Calu3 (cell line): ENCODE measurements at regions of chr10 and their contacts with region 1.

Region 1: GRCh38 chr10:11602919-11603523 is 8.4 kb downstream of the USP6NL start:
- DNase-seq: no peak
- H3K4me3 Mint-ChIP-seq: no peak overlapping the region
- H3K27ac Mint-ChIP-seq: peak overlapping the region; percentile 43
- H3K4me1 Mint-ChIP-seq: peaks cover 35% of the 10 kb centered on the region
- H3K27me3 Mint-ChIP-seq: no peaks in the 10 kb centered on the region
- CTCF ChIP-seq: no peak

Region 2: DNA sequence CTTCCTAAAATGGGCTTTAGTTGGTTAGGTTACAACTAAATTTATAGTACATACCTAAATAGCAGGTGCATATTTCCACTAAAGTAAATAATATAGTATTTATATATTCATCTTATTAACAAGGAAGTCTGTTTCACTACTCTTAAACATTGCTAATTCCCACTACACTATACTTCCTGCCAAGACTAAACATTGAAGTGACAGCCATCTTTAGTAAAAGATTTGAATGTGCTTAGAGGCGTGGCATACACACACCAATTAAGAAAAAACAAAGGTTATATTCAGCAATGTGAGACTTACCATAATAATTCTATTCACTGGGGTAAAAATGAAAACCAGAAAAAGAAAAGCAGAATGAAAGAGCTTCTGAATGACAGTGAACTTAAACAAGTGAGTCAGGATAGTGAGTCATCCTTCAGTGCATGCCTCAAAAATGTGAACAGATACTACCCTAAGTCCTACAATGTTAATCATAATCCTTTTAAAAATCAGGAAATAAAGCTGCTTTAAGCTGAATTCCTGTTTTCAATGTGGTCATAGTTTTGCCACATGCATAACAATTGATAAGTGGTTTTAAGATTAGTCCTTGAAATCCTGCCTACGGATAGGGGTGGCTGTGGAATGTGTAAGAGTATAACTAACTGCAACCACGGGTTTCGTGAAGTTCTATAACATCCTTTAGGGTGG is 51.0 kb before region 1 on chr10:
- CTCF ChIA-PET with region 1: interaction called, 4 read pairs
- intact Hi-C with region 1: loop called (anchors 5 kb)
- DNase-seq: peak; percentile 24
- H3K4me3 Mint-ChIP-seq: peak overlapping the region; percentile 20
- H3K27ac Mint-ChIP-seq: peak overlapping the region; percentile 82
- H3K4me1 Mint-ChIP-seq: peaks cover 76% of the 10 kb centered on the region
- H3K27me3 Mint-ChIP-seq: no peaks in the 10 kb centered on the region
- CTCF ChIP-seq: no peak

Region 3: GRCh38 chr10:11715815-11716494 is 112.9 kb after region 1 on chr10:
- CTCF ChIA-PET with region 1: no interaction called
- intact Hi-C with region 1: loop called (anchors 5 kb)
- DNase-seq: peak; percentile 43
- H3K4me3 Mint-ChIP-seq: peak overlapping the region; percentile 49
- H3K27ac Mint-ChIP-seq: peak overlapping the region; percentile 12
- H3K4me1 Mint-ChIP-seq: peaks cover 34% of the 10 kb centered on the region
- H3K27me3 Mint-ChIP-seq: no peaks in the 10 kb centered on the region
- CTCF ChIP-seq: no peak

Region 4: DNA sequence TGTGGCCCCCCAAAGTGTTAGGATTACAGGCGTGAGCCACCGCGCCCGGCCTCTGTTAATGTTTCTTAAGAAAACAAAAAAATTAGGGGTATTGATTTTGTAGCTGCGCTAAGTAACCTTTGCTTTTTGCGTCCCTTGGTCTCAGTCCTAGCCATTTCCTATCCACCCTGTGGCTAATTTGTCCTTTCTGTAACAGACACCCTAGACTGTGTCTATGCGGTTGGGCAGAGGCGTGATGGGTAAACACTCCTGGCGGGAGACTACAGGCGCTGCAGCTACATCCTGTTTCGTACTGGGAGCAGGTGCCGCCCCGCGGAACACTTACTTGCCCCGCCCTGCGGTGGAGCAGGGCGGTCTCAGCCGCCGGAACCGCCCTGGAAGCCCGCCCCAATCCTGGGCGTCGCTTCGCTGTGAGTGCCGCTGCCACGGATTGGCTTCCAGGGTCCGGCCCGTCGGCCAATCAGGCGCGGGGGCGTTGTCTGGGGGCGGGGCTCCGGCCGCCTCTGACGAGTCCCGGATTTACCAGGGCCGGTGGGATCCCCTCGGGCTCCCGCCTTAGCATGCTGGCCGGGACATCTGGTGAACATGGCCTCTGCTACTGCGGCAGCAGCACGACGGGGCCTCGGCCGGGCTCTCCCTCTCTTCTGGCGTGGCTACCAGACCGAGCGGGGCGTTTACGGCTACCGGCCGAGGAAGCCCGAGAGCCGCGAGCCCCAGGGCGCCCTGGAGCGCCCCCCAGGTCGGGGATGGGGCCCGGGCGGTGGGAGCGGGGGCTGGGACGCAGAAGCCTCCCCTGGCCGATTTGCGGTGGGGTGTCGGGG is 465.6 kb after region 1 on chr10 and contains the start of gene DHTKD1:
- CTCF ChIA-PET with region 1: no interaction called
- intact Hi-C with region 1: no loop called
- DNase-seq: peak; percentile 99
- H3K4me3 Mint-ChIP-seq: peak within 1 kb of the TSS; percentile 52
- H3K27ac Mint-ChIP-seq: peak within 1 kb of the TSS; percentile 72
- H3K4me1 Mint-ChIP-seq: peaks cover 17% of the 10 kb centered on the region
- H3K27me3 Mint-ChIP-seq: no peaks in the 10 kb centered on the region
- CTCF ChIP-seq: no peak
- total RNA-seq, gene DHTKD1: 28.7 and 29.4 TPM in 2 replicates